ENCODE measurements at regions of chr4 and their contacts with region 1.

Region 1: DNA sequence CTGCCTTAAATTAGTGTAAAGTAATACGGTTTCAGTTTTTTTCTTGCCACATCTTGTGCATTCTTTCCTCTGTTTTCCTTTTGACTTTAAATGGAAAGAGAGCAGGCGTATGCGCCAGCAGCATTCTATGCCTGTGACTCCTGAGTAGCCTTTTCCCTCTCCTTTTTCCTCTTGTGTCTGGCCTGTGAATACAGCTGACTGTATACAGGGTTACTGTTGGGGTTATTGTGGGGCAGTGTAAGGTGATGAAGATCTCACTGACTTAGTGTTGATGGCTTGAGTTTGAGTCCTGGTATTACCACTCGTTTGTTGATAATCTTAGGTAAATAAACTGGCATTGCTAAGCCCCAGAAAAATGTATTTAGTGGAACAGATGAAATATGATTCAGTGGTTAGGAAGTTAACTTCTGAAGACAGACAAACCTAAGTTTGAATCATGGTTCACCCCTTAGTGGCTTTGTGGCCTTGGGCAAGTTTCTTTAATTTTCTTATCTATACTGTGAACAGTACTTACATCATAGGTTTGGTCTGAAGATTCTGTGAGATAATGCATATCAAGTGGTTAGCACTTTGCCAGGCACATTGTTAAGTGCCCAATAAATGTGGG is 105.1 kb downstream of the FNIP2 start:
- DNase-seq: no peak

Region 2: GRCh38 chr4:158760866-158761265 is 113.0 kb before region 1 on chr4:
- intact Hi-C with region 1: no loop called
- DNase-seq: no peak

Region 3: DNA sequence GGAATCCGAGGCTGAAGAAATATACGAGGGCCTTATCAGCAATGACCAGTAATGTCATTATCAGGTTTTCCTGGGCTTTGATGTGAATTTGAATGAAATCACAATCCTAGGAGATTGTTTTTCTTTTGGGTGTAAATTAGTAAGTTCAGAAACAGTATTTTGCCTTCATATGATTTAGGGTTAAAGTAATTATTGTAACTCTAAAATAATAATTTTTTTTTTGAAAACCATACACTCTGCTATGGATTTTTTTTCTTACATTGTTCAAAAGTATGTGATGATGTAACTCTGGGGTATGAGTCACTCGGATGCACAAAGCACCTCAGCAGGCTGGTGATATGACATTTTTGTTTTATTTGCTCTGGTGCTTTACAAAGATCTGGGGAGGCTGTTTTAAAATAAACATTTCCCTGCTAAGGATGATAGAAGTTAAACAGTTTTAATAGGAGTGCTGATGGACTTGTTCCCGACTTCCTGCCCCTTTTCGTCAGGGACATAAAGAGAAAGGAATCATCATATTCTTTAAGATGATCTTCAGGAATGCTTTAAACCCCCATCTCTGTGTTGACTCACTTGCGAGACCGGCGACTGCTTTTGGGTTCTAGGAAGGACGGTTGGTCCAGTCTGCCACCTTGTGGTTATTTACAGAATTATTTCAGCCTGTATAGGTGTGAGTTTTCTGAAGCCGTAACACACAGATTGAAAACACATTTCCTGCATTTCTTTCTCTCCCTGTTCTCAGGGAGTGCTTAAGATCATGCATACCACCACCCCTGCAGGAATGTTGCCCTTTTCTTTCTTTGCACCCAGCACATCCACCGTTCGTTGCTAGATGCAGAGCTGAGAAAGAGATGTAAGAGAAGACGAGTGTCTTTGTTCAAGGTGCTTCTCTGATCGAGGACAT is 301.4 kb after region 1 on chr4:
- intact Hi-C with region 1: loop called in 1 of 2 experiments (anchors 10 kb)
- DNase-seq: peak; percentile 81